ENCODE measurements at regions of chr4 and their contacts with region 1.

Region 1: DNA sequence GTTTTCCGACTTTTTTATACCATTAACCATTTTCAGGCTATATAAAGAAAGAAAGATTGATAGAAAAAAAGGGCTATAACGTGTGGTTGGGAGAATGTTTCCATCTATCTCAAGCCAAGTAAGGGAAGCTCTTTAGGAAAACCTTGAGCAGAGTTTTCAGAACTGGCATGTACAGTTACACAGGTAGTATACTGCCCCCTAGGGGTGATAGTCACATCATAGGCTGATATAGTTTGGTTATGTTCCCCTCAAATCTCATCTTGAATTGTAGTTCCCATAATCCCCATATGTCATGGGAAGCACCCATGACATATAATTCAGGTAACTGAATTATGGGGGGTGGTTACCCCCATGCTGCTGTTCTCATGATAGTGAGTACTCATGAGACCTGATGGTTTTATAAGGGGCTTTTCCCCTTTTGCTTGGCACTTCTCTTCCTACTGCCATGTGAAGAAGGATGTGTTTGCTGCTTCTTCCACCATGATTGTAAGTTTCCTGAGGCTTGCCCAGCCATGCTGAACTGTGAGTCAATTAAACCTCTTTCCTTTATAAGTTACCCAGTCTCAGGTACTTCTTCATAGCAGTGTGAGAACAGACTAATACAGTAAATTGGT is 186.8 kb downstream of the TMA16 start:
- DNase-seq: peak; percentile 28 to 66 (median 65)
- H3K4me3 ChIP-seq: no peak overlapping the region
- H3K4me3 Mint-ChIP-seq: no peak overlapping the region
- H3K27ac ChIP-seq: no peak overlapping the region
- H3K27ac Mint-ChIP-seq: no peak overlapping the region
- H3K4me1 ChIP-seq: no peaks in the 10 kb centered on the region
- H3K4me1 Mint-ChIP-seq: peaks cover 1 to 9% (median 4%) of the 10 kb centered on the region in 4 donors
- H3K27me3 ChIP-seq: no peaks in the 10 kb centered on the region
- H3K27me3 Mint-ChIP-seq: peaks cover 2 to 7% of the 10 kb centered on the region in 2 donors

Region 2: GRCh38 chr4:163166041-163166579 is 515.2 kb before region 1 on chr4:
- CTCF ChIA-PET with region 1: no interaction called
- POLR2A ChIA-PET with region 1: no interaction called
- intact Hi-C with region 1: loop called (anchors 10 kb)
- DNase-seq: peak; percentile 66 to 76 (median 68)
- H3K4me3 ChIP-seq: peak overlapping the region; percentile 66 to 80
- H3K4me3 Mint-ChIP-seq: peak overlapping the region; percentile 83 to 97 (median 95)
- H3K27ac ChIP-seq: peak overlapping the region; percentile 90
- H3K27ac Mint-ChIP-seq: peak overlapping the region; percentile 83 to 99 (median 99)
- H3K4me1 ChIP-seq: peaks cover 37% of the 10 kb centered on the region
- H3K4me1 Mint-ChIP-seq: peaks cover 34 to 50% (median 41%) of the 10 kb centered on the region in 4 donors
- H3K27me3 ChIP-seq: no peaks in the 10 kb centered on the region
- H3K27me3 Mint-ChIP-seq: no peaks in the 10 kb centered on the region

Region 3: DNA sequence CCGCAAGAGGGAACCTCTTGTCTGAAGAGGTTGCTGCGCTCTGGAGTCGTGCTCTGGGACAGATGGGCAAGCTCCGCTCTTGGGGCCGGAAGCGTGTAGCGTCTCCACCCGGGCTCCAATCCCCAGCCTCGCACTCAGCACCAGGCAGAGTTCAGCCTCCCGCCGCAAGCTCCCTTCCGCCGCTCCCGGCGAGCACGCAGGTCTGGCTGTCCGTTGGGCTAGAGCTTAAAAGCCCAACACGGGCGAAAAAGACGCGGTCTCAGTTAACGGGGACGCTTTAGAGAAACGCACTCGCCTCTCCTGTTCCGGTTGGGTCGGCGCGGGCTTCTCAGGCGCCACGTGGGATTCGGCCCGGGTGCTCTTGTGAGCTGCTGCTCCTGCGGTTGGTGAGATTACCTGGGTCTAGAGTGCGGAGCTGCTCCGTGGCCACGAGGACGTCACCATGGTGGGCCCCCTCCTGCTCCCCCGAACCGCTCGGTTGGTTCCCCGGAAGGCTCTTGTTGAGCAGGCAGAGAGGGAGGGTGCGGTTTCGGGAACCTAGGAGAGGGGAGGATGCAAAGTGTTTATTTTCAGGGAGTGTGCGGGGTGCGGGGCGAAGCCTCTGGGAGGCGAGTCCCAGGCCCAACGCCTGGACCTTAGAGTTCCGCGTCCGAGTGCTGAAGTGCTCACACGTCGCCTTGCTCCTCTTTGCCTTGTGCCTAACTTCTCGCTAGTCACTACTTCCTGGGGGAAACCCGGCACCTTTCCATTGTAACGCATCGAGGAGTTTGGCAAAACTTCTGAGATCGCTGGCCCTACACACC is 186.8 kb before region 1 on chr4 and contains the start of gene TMA16:
- CTCF ChIA-PET with region 1: interaction called, 6 read pairs
- POLR2A ChIA-PET with region 1: no interaction called
- intact Hi-C with region 1: loop called (anchors 5 kb)
- DNase-seq: peak; percentile 79 to 85 (median 83)
- H3K4me3 ChIP-seq: peak within 1 kb of the TSS; percentile 77 to 98
- H3K4me3 Mint-ChIP-seq: peak within 1 kb of the TSS; percentile 91 to 98 (median 96)
- H3K27ac ChIP-seq: peak within 1 kb of the TSS; percentile 75
- H3K27ac Mint-ChIP-seq: peak within 1 kb of the TSS; percentile 90 to 99 (median 96)
- H3K4me1 ChIP-seq: peaks cover 33% of the 10 kb centered on the region
- H3K4me1 Mint-ChIP-seq: peaks cover 20 to 40% (median 33%) of the 10 kb centered on the region in 4 donors
- H3K27me3 ChIP-seq: no peaks in the 10 kb centered on the region
- H3K27me3 Mint-ChIP-seq: peaks cover 1 to 4% of the 10 kb centered on the region in 2 donors
- total RNA-seq, gene TMA16: 24.6 to 25.0 TPM

Region 4: DNA sequence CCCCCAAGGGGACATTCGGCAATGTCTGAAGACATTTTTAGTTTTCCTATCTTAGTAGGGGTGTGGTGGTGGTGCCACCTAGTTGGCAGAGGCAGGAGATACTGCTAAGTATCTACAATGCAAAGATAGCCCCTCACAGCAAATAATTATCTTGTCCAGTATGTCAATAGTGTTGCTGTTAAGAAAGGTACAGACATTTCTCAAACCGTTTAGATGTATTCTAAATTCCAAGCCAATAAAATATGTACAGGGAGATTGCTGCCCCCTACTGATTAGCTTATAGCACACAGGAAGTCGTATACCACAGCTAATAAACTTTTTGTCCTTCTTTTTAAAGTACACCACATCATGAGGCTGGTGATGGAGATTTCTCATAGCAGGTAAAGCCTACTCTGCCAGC is 73.7 kb after region 1 on chr4:
- CTCF ChIA-PET with region 1: interaction called, 11 read pairs
- POLR2A ChIA-PET with region 1: no interaction called
- intact Hi-C with region 1: loop called (anchors 1 kb)
- DNase-seq: peak in 4 of 5 donors; percentile 32 to 43 (median 38)
- H3K4me3 ChIP-seq: no peak overlapping the region
- H3K4me3 Mint-ChIP-seq: peak overlapping the region in 2 of 8 donors; percentile 29 to 39
- H3K27ac ChIP-seq: no peak overlapping the region
- H3K27ac Mint-ChIP-seq: no peak overlapping the region
- H3K4me1 ChIP-seq: no peaks in the 10 kb centered on the region
- H3K4me1 Mint-ChIP-seq: peaks cover 0 to 8% (median 3%) of the 10 kb centered on the region in 4 donors
- H3K27me3 ChIP-seq: no peaks in the 10 kb centered on the region
- H3K27me3 Mint-ChIP-seq: peaks cover 0 to 2% of the 10 kb centered on the region in 2 donors

Region 5: GRCh38 chr4:163768014-163768413 is 86.7 kb after region 1 on chr4:
- CTCF ChIA-PET with region 1: no interaction called
- POLR2A ChIA-PET with region 1: no interaction called
- intact Hi-C with region 1: no loop called
- DNase-seq: no peak
- H3K4me3 ChIP-seq: no peak overlapping the region
- H3K4me3 Mint-ChIP-seq: no peak overlapping the region
- H3K27ac ChIP-seq: no peak overlapping the region
- H3K27ac Mint-ChIP-seq: no peak overlapping the region
- H3K4me1 ChIP-seq: no peaks in the 10 kb centered on the region
- H3K4me1 Mint-ChIP-seq: no peaks in the 10 kb centered on the region
- H3K27me3 ChIP-seq: no peaks in the 10 kb centered on the region
- H3K27me3 Mint-ChIP-seq: no peaks in the 10 kb centered on the region

Region 6: DNA sequence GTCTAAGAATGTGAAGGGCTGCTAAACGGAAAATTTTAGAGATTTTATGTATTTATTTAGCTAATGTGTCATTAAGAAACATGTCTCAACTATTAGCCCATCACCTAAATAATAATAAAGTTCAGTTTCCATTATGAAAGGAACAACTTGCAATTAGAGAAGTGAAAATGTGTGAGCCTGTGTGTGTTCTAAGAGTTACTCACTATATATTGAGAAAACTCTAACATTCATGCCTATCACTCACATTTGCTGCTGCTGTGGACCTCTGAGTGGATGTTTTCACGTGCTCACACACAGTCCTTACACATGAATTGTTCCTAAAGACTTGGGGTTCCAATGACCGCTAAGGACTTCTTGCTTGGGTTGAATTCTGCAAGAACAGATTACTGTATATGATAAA is 177.2 kb after region 1 on chr4:
- CTCF ChIA-PET with region 1: no interaction called
- POLR2A ChIA-PET with region 1: no interaction called
- intact Hi-C with region 1: no loop called
- DNase-seq: no peak
- H3K4me3 ChIP-seq: no peak overlapping the region
- H3K4me3 Mint-ChIP-seq: no peak overlapping the region
- H3K27ac ChIP-seq: no peak overlapping the region
- H3K27ac Mint-ChIP-seq: no peak overlapping the region
- H3K4me1 ChIP-seq: no peaks in the 10 kb centered on the region
- H3K4me1 Mint-ChIP-seq: peaks cover 0 to 1% (median 0%) of the 10 kb centered on the region in 4 donors
- H3K27me3 ChIP-seq: no peaks in the 10 kb centered on the region
- H3K27me3 Mint-ChIP-seq: no peaks in the 10 kb centered on the region

Region 7: DNA sequence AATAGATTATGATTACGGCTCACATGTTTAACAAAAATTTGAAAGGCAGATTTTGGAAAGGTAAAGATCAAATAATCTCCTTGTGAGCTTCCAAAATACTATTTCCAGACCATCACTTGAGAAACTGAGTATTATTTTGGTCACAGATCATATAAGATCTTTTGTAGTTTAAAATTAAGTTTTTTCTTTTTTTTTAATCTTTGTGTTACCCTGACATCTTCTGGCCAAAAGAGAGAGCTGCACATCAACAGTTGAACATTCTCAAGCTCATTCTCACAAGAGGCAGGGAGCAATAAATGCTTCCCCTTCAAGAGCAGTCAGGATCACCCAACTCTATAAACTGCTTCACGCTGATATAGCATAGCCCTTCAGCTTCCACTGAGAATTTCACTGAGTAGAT is 1415.5 kb after region 1 on chr4:
- CTCF ChIA-PET with region 1: no interaction called
- POLR2A ChIA-PET with region 1: no interaction called
- intact Hi-C with region 1: loop called (anchors 10 kb)
- DNase-seq: peak in 1 of 5 donors; percentile 8
- H3K4me3 ChIP-seq: no peak overlapping the region
- H3K4me3 Mint-ChIP-seq: no peak overlapping the region
- H3K27ac ChIP-seq: no peak overlapping the region
- H3K27ac Mint-ChIP-seq: no peak overlapping the region
- H3K4me1 ChIP-seq: no peaks in the 10 kb centered on the region
- H3K4me1 Mint-ChIP-seq: no peaks in the 10 kb centered on the region
- H3K27me3 ChIP-seq: no peaks in the 10 kb centered on the region
- H3K27me3 Mint-ChIP-seq: no peaks in the 10 kb centered on the region

Measured in CD4-positive, alpha-beta memory T cell (primary cell).